Activated CD8-positive, alpha-beta memory T cell treated with anti-CD3 and anti-CD28 coated beads, Interleukin-2, amount 10 ng/mL, durations not matched to agents 7 days and 5 days (primary cell): ENCODE measurements at regions of chr3 and their contacts with region 1.

Region 1: DNA sequence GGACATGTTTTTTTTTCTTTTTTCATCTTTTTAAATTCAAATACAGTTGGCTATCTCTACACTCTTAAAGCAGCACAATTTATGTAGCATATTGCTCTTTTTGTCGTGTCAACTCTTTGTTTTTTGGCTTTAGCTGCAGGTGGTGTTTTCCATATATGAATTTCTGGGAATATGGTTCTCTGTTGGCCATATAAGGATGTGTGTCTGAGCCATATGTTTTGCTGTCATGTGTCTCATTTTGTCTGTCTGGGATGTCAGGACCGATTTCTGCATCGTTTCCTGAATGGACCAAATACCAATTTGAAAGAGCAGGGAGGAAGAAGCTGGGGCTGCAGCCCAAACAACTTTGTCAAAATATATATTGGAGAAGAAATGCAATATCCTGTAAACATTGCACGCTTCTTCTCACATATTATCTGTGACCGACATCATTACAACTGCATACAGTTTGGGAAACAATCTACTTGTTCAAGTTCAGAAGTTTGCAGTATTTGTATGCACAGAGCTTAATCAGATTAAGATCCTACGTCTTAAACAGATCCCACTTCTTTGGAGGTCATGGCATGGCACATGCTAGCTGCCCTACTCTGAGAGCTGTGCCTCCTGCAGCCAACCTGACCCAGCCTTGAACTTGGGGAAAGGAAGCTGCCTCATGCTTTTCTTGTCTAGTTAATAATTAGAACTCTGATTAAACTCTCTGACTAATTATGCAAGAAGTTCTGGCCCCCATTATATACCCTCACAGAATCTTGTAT is 4.0 kb upstream of the SATB1 start:
- DNase-seq: no peak
- ATAC-seq: no peak
- H3K4me3 Mint-ChIP-seq: peak overlapping the region; percentile 25
- H3K27ac Mint-ChIP-seq: peak overlapping the region; percentile 68
- H3K4me1 Mint-ChIP-seq: peaks cover 65% of the 10 kb centered on the region
- H3K27me3 Mint-ChIP-seq: no peaks in the 10 kb centered on the region

Region 2: GRCh38 chr3:18444595-18445400 is 15.6 kb after region 1 on chr3:
- CTCF ChIA-PET with region 1: interaction called, 17 read pairs
- DNase-seq: peak; percentile 85
- ATAC-seq: peak; percentile 79
- H3K4me3 Mint-ChIP-seq: peak overlapping the region; percentile 99
- H3K27ac Mint-ChIP-seq: peak overlapping the region; percentile 99
- H3K4me1 Mint-ChIP-seq: peaks cover 49% of the 10 kb centered on the region
- H3K27me3 Mint-ChIP-seq: no peaks in the 10 kb centered on the region